ENCODE measurements at regions of chr3 and their contacts with region 1.

Region 1: GRCh38 chr3:16132928-16133327 is 41.6 kb upstream of the GALNT15 start:
- DNase-seq: no peak
- ATAC-seq: no peak
- H3K4me3 ChIP-seq: no peak overlapping the region
- H3K27ac ChIP-seq: no peak overlapping the region
- H3K4me1 ChIP-seq: no peaks in the 10 kb centered on the region
- H3K27me3 ChIP-seq: no peaks in the 10 kb centered on the region; a peak in 1 of 4 replicates
- CTCF ChIP-seq: no peak
- EP300 ChIP-seq: no peak
- POLR2A ChIP-seq: no peak
- RAD21 ChIP-seq: no peak

Region 2: DNA sequence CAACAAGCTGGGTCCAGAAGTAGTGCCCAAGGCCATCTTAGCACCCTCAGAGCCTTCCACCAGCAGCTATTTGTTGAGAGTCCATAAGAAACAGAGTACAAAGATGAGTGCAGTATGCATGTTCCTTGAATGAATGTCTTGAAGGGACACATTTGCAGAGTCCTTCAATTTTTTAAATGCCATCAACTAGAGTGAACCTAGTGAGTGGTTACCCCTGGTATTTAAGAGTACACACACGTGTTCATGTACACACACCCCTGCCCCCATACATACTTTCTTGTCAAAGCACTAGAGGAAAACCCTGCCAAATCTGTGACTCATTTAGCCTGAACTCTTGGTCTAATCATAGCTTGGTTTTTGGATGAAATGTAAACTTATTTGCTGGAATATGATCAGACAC is 42.9 kb before region 1 on chr3:
- CTCF ChIA-PET with region 1: no interaction called
- POLR2A ChIA-PET with region 1: no interaction called
- RAD21 ChIA-PET with region 1: no interaction called
- SMC1A ChIA-PET with region 1: no interaction called
- in situ Hi-C with region 1: no loop called
- intact Hi-C with region 1: no loop called
- DNase-seq: no peak
- ATAC-seq: no peak
- H3K4me3 ChIP-seq: no peak overlapping the region
- H3K27ac ChIP-seq: no peak overlapping the region
- H3K4me1 ChIP-seq: no peaks in the 10 kb centered on the region
- H3K27me3 ChIP-seq: 0 out of 4 replicates have a peak, but pooled peaks cover 0 to 3% of the 10 kb centered on the region in 2 experiments
- CTCF ChIP-seq: no peak
- EP300 ChIP-seq: no peak
- POLR2A ChIP-seq: no peak
- RAD21 ChIP-seq: no peak

Region 3: DNA sequence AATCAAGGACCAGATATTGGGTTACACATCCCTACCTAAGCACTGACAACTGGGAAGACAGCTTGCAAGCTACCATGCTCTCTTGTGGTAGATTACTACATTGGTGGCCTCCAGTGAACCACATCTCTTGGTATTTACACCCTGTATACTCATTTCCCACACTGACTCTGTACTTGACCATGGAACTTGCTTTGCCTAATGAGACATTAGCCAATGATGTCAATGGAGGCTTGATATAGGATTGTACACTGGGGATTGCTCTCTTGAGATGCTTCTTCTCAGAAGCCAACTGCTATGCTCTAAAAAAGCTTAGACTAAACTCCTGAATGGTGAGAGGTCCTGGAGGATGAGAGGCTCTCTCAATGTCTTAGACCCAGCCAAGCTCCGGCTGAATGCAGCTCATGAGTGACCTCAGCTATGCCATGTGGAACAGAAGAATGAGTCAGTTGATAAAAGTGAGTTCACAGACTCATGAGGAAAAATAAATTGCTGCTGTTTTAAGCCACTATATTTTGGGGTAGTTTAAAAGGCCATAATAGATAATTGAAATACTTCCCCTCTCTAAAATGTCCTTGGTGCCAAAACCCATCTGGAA is 19.9 kb before region 1 on chr3:
- CTCF ChIA-PET with region 1: no interaction called
- POLR2A ChIA-PET with region 1: no interaction called
- RAD21 ChIA-PET with region 1: no interaction called
- SMC1A ChIA-PET with region 1: no interaction called
- in situ Hi-C with region 1: no loop called
- intact Hi-C with region 1: no loop called
- DNase-seq: no peak
- ATAC-seq: no peak
- H3K4me3 ChIP-seq: no peak overlapping the region
- H3K27ac ChIP-seq: no peak overlapping the region
- H3K4me1 ChIP-seq: no peaks in the 10 kb centered on the region
- H3K27me3 ChIP-seq: no peaks in the 10 kb centered on the region
- CTCF ChIP-seq: no peak
- EP300 ChIP-seq: no peak
- POLR2A ChIP-seq: no peak
- RAD21 ChIP-seq: no peak

Region 4: GRCh38 chr3:16148783-16149182 is 15.9 kb after region 1 on chr3:
- CTCF ChIA-PET with region 1: interaction called, 4 read pairs
- POLR2A ChIA-PET with region 1: no interaction called
- RAD21 ChIA-PET with region 1: no interaction called
- SMC1A ChIA-PET with region 1: interaction called, 13 read pairs
- in situ Hi-C with region 1: no loop called
- intact Hi-C with region 1: no loop called
- DNase-seq: no peak
- ATAC-seq: no peak
- H3K4me3 ChIP-seq: no peak overlapping the region
- H3K27ac ChIP-seq: no peak overlapping the region
- H3K4me1 ChIP-seq: peaks cover 13% of the 10 kb centered on the region; the same call in 1 of the 2 replicates
- H3K27me3 ChIP-seq: no peaks in the 10 kb centered on the region
- CTCF ChIP-seq: no peak
- EP300 ChIP-seq: no peak
- POLR2A ChIP-seq: no peak
- RAD21 ChIP-seq: no peak

Region 5: DNA sequence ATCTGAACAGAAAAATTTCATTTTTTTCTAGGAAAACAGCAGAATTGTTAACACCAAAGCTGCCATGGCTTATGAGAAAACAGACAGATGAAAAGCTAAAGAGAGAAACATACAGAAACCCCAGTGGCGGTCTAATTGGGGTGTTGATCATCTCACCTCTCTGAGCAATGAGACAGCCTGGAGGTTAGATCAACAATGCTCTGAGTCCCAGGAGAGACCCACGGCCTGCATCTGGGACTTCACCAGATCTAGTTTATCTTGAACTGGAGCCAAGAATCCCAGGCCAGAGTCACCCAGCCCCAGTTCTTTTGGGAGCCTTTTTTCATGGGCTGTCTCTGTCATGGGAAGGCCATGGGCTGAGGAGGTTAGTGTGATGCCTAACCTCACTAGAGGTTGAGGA is 38.1 kb after region 1 on chr3:
- CTCF ChIA-PET with region 1: no interaction called
- POLR2A ChIA-PET with region 1: no interaction called
- RAD21 ChIA-PET with region 1: no interaction called
- SMC1A ChIA-PET with region 1: no interaction called
- in situ Hi-C with region 1: no loop called
- intact Hi-C with region 1: no loop called
- DNase-seq: no peak
- ATAC-seq: no peak
- H3K4me3 ChIP-seq: no peak overlapping the region
- H3K27ac ChIP-seq: no peak overlapping the region
- H3K4me1 ChIP-seq: no peaks in the 10 kb centered on the region
- H3K27me3 ChIP-seq: peaks cover 0 to 3% of the 10 kb centered on the region in 2 experiments; a peak in 2 of 4 replicates
- CTCF ChIP-seq: no peak
- EP300 ChIP-seq: no peak
- POLR2A ChIP-seq: no peak
- RAD21 ChIP-seq: no peak

Measured in GM12878 (cell line).